Activated CD4-positive, alpha-beta memory T cell treated with anti-CD3 and anti-CD28 coated beads for 36 hours (primary cell): ENCODE measurements at regions of chr15 and their contacts with region 1.

Region 1: DNA sequence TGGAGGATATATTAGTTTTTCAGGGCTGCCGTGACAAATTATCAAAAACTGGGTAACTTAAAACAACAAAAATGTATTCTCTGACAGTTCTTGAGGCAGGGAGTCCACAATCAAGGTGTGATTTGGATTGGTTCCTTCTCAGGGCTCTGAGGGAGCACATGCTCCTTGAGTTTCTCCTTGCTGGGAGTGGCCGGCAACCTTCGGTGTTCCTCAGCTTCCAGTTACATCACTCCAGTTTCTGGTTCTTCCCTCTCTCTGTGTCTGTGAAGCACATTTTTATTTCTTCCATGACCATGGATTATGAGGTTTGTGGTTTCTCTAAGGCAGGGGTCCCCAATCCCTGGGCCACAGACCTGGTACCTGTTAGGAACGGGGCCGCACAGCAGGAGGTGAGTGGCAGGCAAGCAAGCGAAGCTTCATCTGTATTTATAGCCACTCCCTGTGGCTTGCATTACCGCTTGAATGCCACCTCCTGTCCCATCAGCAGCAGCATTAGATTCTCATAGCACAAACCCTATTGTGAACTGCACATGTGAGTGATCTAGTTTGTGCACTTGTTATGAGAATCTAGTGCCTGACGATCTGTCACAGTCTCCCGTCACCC is 24.3 kb downstream of the LRRC28 start:
- DNase-seq: no peak
- H3K4me3 Mint-ChIP-seq: no peak overlapping the region
- H3K27ac Mint-ChIP-seq: no peak overlapping the region
- H3K4me1 Mint-ChIP-seq: peaks cover 24% of the 10 kb centered on the region
- H3K27me3 Mint-ChIP-seq: no peaks in the 10 kb centered on the region

Region 2: DNA sequence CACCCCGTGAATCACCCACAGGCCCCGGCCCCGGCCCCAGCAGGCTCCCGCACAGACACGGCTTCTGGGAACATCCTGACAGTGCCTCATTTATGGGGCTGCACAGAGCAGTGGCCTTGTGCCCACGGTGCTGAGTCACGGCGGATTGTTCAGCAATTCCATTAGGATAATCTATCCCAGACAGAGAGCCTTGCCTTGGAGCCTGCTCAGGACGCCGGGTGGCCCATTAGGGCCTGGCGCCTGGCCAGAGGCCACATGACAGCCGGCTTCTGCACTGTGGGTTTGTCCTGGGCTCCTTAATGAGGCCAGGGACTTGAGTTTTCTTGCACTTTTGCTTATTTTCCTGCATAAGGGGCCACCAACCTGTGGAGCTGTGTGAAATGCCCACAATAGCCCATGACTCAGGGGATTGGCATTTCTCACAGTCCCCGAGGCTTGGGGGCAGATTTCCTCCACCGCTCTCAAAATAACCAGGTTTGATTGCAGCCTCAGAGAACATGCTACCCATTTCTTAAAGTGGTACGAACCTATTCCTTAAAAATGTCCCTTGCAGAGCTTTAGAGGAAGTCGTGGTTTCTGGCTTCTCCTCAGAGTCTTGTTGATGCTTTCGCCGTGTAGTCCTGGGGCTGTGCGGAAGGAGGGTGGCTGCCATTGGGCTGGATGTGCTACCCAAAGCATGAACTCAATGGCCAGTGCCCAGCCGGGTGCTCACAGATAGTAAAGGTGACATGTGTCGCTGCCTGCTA is 151.7 kb before region 1 on chr15:
- CTCF ChIA-PET with region 1: no interaction called
- POLR2A ChIA-PET with region 1: no interaction called
- intact Hi-C with region 1: no loop called
- DNase-seq: no peak
- H3K4me3 Mint-ChIP-seq: no peak overlapping the region
- H3K27ac Mint-ChIP-seq: no peak overlapping the region
- H3K4me1 Mint-ChIP-seq: no peaks in the 10 kb centered on the region
- H3K27me3 Mint-ChIP-seq: peaks cover 1% of the 10 kb centered on the region

Region 3: DNA sequence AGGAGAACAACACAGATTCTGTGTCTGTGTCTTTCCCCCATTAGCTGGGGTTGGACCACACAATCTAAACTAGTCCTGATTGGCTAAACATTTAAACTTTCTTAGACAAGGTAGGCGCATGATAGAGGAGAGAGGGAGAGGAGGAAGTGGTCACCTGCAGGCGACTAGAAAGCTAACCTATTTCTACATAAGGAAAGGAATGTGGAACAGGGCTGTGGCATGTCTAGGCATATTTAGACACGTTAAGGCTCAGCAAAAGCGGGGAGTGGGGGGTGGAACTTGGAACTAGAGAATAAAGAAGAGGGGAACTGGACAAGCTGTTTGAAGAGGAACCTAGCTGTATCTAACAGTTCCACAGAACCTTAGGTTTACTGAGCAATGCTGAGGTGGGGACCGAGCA is 11.5 kb before region 1 on chr15:
- CTCF ChIA-PET with region 1: interaction called, 19 read pairs
- POLR2A ChIA-PET with region 1: no interaction called
- intact Hi-C with region 1: no loop called
- DNase-seq: no peak
- H3K4me3 Mint-ChIP-seq: no peak overlapping the region
- H3K27ac Mint-ChIP-seq: no peak overlapping the region
- H3K4me1 Mint-ChIP-seq: no peaks in the 10 kb centered on the region
- H3K27me3 Mint-ChIP-seq: no peaks in the 10 kb centered on the region

Region 4: DNA sequence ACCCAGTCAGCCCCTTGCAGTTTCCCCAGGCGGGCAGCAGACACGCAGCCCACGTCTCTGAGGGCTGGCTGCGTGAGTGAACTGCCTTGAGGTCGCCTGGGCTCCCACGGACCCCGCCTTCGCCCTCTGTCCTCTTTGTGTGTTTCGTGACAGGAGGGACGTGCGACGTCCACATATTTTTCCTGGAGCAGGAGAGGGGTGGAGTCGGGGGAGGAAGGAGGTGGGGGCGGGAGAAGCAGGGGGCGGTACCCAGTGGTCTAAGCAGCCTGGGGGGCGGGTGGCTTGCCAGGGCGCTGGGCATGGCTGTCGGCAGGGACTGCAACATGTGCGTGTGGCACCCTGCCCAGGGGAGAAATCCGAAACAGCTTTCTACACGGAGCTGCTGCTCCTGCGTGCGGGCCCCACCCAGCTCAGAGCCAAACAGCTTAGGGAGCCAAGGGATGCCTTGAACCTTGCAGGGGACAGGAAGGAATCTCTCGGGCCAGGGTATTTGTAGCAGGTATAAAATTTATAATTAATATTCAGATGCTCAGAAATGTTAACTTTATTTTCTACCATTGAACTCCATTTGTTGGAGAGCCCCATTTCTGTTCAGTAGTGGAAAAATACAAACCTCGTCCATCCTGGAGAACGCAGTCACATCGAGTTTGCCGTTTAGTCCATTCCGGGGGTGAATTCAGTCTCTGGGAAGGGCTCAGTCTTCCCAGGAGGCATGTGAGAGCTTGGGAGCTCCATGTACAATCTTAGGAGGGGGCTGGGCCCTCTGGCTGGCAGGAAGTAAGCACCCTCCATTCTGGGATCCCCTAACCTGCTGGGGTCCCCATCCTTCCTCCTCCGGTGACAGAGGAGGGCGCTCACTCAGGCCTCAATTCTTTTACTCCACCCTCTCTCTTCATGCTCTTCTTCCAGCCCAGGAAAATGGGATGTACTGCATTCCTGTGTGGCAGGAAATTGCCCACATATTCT is 211.0 kb after region 1 on chr15:
- CTCF ChIA-PET with region 1: no interaction called
- POLR2A ChIA-PET with region 1: no interaction called
- intact Hi-C with region 1: no loop called
- DNase-seq: no peak
- H3K4me3 Mint-ChIP-seq: no peak overlapping the region
- H3K27ac Mint-ChIP-seq: no peak overlapping the region
- H3K4me1 Mint-ChIP-seq: peaks cover 17% of the 10 kb centered on the region
- H3K27me3 Mint-ChIP-seq: peaks cover 16% of the 10 kb centered on the region

Region 5: DNA sequence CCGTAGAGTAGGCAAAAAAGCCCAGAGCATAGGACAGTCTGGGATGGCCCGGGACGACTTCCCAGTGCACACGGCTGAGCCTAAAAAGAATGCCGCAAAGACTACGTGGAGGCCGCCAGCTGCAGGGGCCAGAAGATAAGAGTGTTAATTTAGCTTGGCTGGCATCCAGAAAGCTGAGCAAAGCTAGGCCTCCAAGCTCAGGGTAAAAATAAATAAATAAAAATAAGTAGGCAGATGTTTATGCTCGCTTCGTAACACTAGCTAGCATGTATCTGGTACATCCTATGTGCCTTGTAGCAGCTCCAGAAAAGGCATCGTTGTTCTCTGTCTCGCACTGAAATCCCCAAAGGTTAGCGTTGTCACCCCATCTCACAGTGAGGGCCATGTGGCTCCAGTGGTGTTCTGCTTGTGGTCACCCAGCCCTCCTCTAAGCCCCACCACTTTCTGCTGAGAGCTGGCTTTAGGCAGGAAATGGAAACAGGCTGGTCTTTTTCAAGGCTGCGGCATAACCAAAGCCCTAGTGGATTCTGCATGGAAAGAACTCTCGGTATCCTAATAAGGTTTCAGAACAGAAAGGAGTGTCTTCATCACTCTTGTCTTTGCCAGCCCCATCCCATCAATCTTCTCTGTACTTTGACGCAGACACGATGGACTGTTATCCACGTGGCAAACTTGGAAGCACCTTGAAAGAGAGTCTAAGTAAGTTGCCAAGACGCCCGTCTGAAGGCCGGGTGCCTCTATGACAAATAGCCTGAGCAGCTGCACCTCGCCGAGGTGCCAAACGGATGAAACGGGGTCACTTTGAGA is 232.1 kb after region 1 on chr15:
- CTCF ChIA-PET with region 1: no interaction called
- POLR2A ChIA-PET with region 1: no interaction called
- intact Hi-C with region 1: loop called (anchors 10 kb)
- DNase-seq: no peak
- H3K4me3 Mint-ChIP-seq: no peak overlapping the region
- H3K27ac Mint-ChIP-seq: no peak overlapping the region
- H3K4me1 Mint-ChIP-seq: peaks cover 24% of the 10 kb centered on the region
- H3K27me3 Mint-ChIP-seq: no peaks in the 10 kb centered on the region

Region 6: DNA sequence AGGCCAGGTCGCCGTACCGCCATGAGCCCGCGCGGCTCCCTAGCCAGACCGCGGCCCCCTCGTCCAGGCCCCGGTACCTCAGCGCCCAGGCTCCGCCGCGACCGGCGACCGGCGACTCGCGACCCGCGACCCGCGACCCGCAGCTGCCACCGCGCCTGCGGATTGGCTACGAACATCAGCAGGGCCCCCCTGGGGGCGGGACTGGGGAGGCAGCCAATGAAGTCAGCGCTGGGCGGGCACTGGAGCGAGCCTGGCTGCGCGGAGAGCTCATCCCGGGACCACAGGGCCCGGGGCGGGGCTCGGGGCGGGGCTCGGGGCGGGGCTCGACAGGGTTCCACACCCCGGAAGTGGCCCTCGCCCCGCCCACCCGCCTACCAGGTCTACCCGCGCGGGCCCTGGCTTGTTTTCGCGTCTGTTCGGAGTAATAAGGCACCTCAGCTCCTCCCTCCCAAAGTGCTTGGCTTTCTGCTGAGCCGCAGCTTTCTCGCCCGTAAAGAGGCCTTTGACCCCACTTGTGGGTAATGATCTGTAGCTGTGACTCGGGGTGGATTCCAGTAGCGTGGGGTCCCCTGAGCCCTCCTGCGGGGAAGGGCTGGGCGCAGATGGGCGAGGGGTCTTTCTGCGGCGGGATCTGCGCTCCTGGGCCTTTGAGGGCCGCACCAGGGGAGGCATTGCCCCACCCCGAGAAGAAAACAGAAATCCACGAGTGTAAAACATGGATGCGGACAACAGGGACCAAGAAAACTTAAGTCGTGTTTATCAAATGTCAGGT is 457.8 kb after region 1 on chr15 and contains the start of gene LYSMD4:
- CTCF ChIA-PET with region 1: interaction called, 10 read pairs
- POLR2A ChIA-PET with region 1: no interaction called
- intact Hi-C with region 1: no loop called
- DNase-seq: peak; percentile 99
- H3K4me3 Mint-ChIP-seq: peak within 1 kb of the TSS; percentile 75
- H3K27ac Mint-ChIP-seq: peak within 1 kb of the TSS; percentile 92
- H3K4me1 Mint-ChIP-seq: peaks cover 11% of the 10 kb centered on the region
- H3K27me3 Mint-ChIP-seq: no peaks in the 10 kb centered on the region
- total RNA-seq, gene LYSMD4: 5.2 to 7.6 TPM

Region 7: GRCh38 chr15:99755692-99756409 is 480.2 kb after region 1 on chr15:
- CTCF ChIA-PET with region 1: interaction called, 108 read pairs
- POLR2A ChIA-PET with region 1: no interaction called
- intact Hi-C with region 1: loop called (anchors 1 kb)
- DNase-seq: peak; percentile 35
- H3K4me3 Mint-ChIP-seq: no peak overlapping the region
- H3K27ac Mint-ChIP-seq: no peak overlapping the region
- H3K4me1 Mint-ChIP-seq: no peaks in the 10 kb centered on the region
- H3K27me3 Mint-ChIP-seq: peaks cover 2% of the 10 kb centered on the region